AG04449 (cell line): ENCODE measurements at regions of chr4 and their contacts with region 1.

Region 1: DNA sequence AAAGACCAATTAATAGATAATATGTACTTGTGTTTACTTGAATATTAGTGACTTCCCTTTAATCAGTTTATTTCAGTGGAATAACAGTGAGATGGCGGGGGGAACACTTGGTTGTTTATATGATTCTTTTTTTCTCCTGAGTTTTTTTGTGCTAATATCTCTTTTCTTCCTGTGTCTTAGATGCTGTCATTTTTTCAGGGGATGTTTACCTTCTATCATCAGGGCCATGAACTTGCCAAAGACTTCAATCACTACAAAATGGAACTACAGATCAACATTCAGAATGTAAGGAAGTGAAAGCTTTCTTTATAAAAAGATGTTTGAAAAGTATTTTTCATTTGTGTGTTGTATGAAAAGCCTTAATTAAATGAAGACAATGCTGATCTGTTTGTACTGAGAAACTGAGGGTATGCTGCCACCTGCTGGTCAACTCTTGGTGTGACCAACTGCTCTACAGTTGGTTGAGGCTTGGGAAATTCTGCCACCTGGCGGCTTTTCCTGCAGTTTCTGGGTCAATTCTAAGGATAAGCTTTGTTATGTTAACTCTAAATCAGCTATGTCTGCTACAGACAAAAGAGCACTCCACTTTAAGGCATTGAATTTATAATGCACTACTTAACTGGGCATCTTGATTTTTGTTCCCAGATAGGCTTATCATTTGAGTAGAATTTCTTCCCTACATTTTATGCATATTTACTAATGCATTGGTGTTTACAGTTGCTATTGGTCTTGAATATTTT is 134.8 kb downstream of the ARHGAP10 start:
- DNase-seq: peak; percentile 55
- H3K4me3 ChIP-seq: no peak overlapping the region
- CTCF ChIP-seq: peak; percentile 89

Region 2: DNA sequence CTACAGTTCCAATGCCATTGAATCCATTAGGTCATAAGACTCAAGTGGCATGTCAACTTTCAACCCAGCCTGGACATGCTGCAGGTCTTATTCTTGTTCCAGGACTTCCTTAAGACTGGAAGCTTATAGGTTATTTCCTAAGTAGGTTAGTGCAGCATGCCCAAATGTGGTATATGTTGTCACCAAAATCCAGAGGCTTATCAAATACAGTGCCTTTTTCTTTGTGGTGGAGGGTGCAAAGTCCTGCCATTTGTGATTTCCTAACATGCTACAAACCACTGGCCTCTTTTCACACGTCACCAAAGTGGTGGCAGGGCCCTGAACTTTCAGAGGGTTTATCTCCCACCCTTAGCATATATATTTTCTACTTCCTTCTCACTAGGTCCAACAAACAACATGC is 259.2 kb before region 1 on chr4:
- CTCF ChIA-PET with region 1: interaction called, 18 read pairs
- POLR2A ChIA-PET with region 1: no interaction called
- DNase-seq: no peak
- H3K4me3 ChIP-seq: no peak overlapping the region
- CTCF ChIP-seq: no peak

Region 3: GRCh38 chr4:147678796-147679549 is 187.7 kb before region 1 on chr4:
- CTCF ChIA-PET with region 1: interaction called, 77 read pairs
- POLR2A ChIA-PET with region 1: interaction called, 3 read pairs
- DNase-seq: no peak
- H3K4me3 ChIP-seq: no peak overlapping the region
- CTCF ChIP-seq: no peak

Region 4: DNA sequence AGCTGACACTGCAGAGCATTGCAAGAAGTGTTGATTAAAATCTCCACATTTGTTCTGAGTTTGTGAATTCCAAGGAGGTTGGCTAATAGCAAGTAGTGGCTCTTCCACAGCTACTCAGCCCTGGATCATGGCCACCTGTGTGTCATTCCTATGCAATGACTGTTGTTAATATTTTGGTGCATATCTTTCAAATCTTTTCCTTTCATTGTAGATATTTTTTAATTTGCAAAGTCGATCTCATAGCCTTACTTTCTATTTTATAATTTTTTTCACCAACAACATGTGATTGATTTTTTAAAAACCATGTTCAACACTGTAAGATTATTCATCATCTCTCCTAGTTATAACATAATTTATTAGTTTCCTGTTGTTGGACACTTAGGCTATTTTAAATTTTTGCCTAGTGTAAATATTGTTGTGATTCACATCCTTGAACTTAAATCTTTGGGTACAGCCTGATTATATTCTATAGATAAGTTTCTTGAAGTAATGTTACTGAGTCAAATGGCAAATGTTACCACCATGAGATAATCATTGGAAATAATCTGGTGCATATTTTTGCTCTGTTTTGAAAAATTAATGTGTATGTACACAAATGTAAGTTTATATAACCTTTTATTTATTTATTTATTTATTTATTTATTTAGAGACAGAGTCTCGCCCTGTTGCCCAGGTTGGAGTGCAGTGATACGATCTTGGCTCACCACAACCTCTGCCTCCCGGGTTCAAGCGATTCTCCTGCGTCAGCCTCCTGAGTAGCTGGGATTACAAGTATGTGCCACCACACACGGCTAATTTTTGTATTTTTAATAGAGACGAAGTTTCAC is 151.9 kb before region 1 on chr4:
- CTCF ChIA-PET with region 1: interaction called, 421 read pairs
- POLR2A ChIA-PET with region 1: no interaction called
- DNase-seq: peak; percentile 80
- H3K4me3 ChIP-seq: no peak overlapping the region
- CTCF ChIP-seq: no peak

Region 5: GRCh38 chr4:147777456-147778091 is 89.1 kb before region 1 on chr4:
- CTCF ChIA-PET with region 1: interaction called, 10 read pairs
- POLR2A ChIA-PET with region 1: no interaction called
- DNase-seq: no peak
- H3K4me3 ChIP-seq: no peak overlapping the region
- CTCF ChIP-seq: no peak

Region 6: DNA sequence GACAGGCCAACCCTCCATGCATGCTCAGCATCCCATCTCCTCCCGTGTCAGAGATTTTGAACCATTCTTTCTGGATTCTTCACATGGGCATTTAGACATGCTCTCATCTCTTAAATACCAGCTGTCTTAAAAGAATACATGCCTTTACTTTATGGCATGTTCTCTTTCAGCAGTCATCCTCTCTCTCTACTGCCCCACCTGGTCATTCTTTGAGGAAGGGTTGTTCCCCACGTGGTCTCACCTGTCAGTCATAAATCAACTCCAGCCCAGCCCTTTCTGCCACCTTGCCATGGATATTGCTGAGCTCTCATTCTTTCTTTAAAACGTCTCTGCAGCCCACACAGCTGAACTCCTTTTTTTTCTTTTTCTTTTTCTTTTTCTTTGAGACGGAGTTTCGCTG is 23.5 kb before region 1 on chr4:
- CTCF ChIA-PET with region 1: interaction called, 99 read pairs
- POLR2A ChIA-PET with region 1: no interaction called
- DNase-seq: no peak
- H3K4me3 ChIP-seq: no peak overlapping the region
- CTCF ChIP-seq: no peak